A549 (cell line): ENCODE measurements at regions of chr7 and their contacts with region 1.

Region 1: DNA sequence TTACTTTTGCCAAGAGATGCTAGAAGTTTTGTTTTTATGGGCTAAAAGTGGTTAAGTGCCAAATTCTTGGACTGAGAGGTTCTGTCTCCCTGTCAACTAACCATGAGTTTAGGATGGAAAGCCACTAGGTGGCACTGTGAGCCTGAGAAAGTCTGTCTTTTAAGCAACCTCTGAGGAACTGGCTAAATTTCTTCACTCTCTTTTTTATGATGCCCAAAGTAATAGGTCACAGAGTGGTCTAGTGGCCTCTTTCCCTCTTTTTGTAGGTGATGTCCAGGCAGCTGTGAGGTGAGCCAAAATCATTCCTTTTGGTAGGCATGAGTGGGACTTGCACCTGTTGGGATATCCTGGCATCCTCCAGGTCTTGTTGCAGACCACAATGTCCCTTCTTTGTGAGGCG is 56.8 kb downstream of the SND1 start:
- DNase-seq: peak; percentile 33 to 79
- ATAC-seq: peak; percentile 81 to 94
- H3K4me3 ChIP-seq: no peak overlapping the region
- H3K27ac ChIP-seq: no peak overlapping the region
- H3K4me1 ChIP-seq: peaks cover 10% of the 10 kb centered on the region; the same call in 1 of the 3 replicates
- CTCF ChIP-seq: peak; percentile 85
- EP300 ChIP-seq: no peak
- POLR2A ChIP-seq: no peak
- RAD21 ChIP-seq: peak; percentile 79 to 83

Region 2: DNA sequence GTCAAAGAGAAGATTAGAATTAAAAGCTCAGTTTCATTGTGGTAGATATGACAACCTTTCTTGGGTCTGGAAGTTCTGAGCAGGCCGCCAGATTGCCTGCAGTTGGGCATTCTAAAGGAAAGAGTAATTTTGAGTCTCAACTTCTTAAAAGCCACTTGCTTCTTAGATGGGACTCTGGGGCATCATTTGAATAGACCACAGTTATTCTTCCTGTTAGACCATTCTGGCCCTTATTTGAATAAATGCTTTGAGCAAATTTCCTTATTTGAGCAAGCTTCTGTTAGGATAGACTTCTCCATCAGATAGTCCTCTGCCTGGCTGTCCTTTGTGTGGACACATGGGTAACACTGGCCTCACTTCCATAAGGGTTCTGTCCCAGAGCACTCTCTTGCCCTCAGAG is 16.6 kb before region 1 on chr7:
- CTCF ChIA-PET with region 1: interaction called, 18 read pairs
- POLR2A ChIA-PET with region 1: interaction called, 3 read pairs
- DNase-seq: no peak
- ATAC-seq: no peak
- H3K4me3 ChIP-seq: no peak overlapping the region
- H3K27ac ChIP-seq: no peak overlapping the region
- H3K4me1 ChIP-seq: no peaks in the 10 kb centered on the region
- CTCF ChIP-seq: no peak
- EP300 ChIP-seq: no peak
- POLR2A ChIP-seq: no peak
- RAD21 ChIP-seq: no peak

Region 3: GRCh38 chr7:127733986-127734385 is 25.2 kb after region 1 on chr7:
- CTCF ChIA-PET with region 1: interaction called, 22 read pairs
- POLR2A ChIA-PET with region 1: no interaction called
- DNase-seq: no peak
- ATAC-seq: no peak
- H3K4me3 ChIP-seq: no peak overlapping the region
- H3K27ac ChIP-seq: no peak overlapping the region
- H3K4me1 ChIP-seq: no peaks in the 10 kb centered on the region
- CTCF ChIP-seq: no peak
- EP300 ChIP-seq: no peak
- POLR2A ChIP-seq: no peak
- RAD21 ChIP-seq: no peak

Region 4: DNA sequence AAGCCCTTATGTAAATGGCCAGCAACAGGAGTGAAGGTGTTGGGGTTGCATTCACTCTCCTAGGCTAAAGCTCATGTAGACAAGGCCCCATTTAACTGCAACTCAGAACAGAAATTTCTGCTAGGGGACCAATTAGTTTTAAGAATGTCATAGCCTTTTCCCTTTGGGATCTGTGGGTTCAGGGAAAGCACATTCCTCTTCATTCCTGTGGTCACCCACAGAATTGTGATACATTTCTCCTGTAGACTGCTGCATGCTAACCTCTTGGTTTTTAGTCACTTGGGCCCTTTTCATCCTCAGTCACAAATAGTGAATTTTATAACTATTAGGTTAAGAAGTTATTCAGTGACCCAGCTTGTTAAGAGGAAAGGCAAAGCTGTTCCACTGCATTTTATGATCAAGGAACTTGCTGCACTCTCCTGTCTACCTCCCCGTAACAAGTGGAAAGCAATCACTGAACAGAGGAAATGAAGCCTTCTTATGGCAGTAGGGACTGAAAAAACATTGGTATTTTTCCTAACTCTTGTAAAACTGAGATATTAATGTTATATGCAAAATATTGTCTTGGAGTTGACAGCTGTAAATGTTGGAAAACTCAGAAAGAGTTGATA is 68.1 kb after region 1 on chr7:
- CTCF ChIA-PET with region 1: no interaction called
- POLR2A ChIA-PET with region 1: no interaction called
- DNase-seq: no peak
- ATAC-seq: no peak
- H3K4me3 ChIP-seq: no peak overlapping the region
- H3K27ac ChIP-seq: no peak overlapping the region
- H3K4me1 ChIP-seq: no peaks in the 10 kb centered on the region; the same call in 1 of the 3 replicates
- CTCF ChIP-seq: no peak
- EP300 ChIP-seq: no peak
- POLR2A ChIP-seq: no peak
- RAD21 ChIP-seq: no peak

Region 5: DNA sequence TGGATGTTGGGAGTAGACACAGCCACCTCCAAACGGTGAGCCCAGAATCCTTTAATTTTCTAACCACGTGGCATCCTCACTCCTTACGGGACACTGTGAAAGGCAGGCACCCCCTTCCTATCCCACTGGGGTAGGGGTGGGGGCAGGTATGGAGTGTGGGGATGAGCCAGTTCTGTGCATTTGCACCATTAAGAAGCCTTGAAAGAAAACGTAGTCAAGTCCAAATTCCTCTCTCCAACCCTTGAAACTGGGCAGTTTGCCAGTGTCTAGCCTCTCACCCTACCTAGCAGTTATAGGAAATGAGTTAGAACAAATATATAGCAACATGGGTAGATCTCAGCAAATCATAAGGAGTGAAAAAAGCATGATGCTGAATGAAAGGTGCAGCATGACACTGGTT is 439.9 kb after region 1 on chr7:
- CTCF ChIA-PET with region 1: no interaction called
- POLR2A ChIA-PET with region 1: no interaction called
- DNase-seq: no peak
- ATAC-seq: peak; percentile 25 to 33; a peak in 2 of 6 replicates
- H3K4me3 ChIP-seq: no peak overlapping the region
- H3K27ac ChIP-seq: no peak overlapping the region
- H3K4me1 ChIP-seq: no peaks in the 10 kb centered on the region; the same call in 2 of the 3 replicates
- CTCF ChIP-seq: no peak
- EP300 ChIP-seq: no peak
- POLR2A ChIP-seq: no peak
- RAD21 ChIP-seq: no peak

Region 6: GRCh38 chr7:129480674-129481365 is 1772.0 kb after region 1 on chr7:
- CTCF ChIA-PET with region 1: no interaction called
- POLR2A ChIA-PET with region 1: no interaction called
- DNase-seq: no peak
- ATAC-seq: no peak
- H3K4me3 ChIP-seq: no peak overlapping the region
- H3K27ac ChIP-seq: no peak overlapping the region
- H3K4me1 ChIP-seq: no peaks in the 10 kb centered on the region
- CTCF ChIP-seq: no peak
- EP300 ChIP-seq: no peak
- POLR2A ChIP-seq: no peak
- RAD21 ChIP-seq: no peak